PC-3 (cell line): ENCODE measurements at regions of chr9 and their contacts with region 1.

Region 1: DNA sequence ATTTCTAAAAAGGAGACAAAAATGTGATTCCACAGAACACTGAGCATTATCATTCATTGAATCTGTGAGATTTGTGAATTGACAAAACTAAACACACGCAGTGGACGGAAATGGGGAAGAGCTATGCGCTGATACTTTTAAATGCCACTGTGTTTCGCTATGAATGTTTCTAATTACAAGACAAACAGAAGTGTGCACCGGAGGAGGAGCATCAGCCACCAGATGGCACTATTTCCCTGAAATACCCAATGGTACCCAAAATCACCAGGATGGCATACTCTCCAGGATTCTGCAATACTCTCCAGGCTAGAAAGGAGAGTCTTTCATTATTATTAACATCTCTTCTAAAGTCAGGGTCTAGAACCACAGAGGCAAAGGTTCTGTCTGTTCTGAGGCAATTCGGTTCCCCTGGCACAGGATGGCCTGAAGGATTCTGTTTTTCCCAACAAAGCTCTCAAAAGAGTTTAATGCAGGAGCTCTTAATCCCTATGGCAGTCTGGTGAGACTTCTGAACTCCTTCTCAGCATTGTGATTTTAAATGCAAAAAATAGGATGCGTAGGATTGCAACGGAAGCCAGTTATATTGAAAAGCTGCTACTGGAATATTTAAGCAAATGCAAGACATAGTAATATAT is 13.8 kb upstream of the PUM3 start:
- DNase-seq: peak; percentile 75
- ATAC-seq: peak; percentile 81
- H3K4me3 ChIP-seq: no peak overlapping the region
- H3K27ac ChIP-seq: no peak overlapping the region
- H3K4me1 ChIP-seq: no peaks in the 10 kb centered on the region
- H3K27me3 ChIP-seq: no peaks in the 10 kb centered on the region; the same call in 1 of the 2 replicates
- CTCF ChIP-seq: peak; percentile 80

Region 2: DNA sequence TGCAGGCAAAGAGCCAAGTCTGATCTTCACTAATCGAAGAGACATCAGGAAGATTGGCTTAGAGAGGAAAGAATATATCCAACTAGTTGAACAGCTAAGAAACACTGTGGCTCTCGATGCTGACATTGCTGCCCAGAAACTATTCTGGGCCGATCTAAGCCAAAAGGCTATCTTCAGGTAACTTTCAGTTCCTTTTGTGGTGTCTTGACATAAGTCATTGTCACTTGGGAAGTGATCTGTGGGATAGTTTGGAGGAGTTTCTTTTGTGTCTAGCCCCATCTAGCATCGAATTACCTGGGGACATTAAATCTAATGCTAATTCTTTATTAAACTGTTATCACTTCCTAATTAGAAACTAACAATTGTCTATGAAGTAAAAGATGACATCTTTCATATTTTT is 212.1 kb before region 1 on chr9:
- CTCF ChIA-PET with region 1: no interaction called
- POLR2A ChIA-PET with region 1: no interaction called
- intact Hi-C with region 1: no loop called
- DNase-seq: no peak
- ATAC-seq: no peak
- H3K4me3 ChIP-seq: no peak overlapping the region
- H3K27ac ChIP-seq: no peak overlapping the region
- H3K4me1 ChIP-seq: no peaks in the 10 kb centered on the region
- H3K27me3 ChIP-seq: no peaks in the 10 kb centered on the region
- CTCF ChIP-seq: no peak

Region 3: DNA sequence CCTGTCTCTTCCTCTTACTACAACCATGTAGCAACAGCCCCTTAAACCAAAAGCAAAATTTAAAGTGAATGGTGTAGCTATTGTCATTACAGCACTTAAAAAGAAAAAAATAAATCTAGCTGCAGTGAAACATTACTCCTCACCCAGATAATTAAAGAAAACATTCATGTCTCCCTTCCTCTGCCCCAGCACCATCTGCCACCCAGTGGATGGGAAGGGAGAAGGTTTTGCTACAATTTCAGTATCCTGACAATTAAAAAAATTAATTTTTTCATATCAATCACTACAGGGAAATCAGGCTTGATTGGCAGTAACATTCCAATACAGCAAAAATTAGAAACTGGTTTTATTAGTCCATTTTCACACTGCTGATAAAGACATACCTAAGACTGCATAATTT is 133.6 kb after region 1 on chr9:
- CTCF ChIA-PET with region 1: no interaction called
- POLR2A ChIA-PET with region 1: no interaction called
- intact Hi-C with region 1: loop called (anchors 2 kb)
- DNase-seq: peak; percentile 7
- ATAC-seq: no peak
- H3K4me3 ChIP-seq: no peak overlapping the region
- H3K27ac ChIP-seq: no peak overlapping the region
- H3K4me1 ChIP-seq: no peaks in the 10 kb centered on the region
- H3K27me3 ChIP-seq: peaks cover 22% of the 10 kb centered on the region
- CTCF ChIP-seq: peak; percentile 38; the same call in 1 of the 2 replicates

Region 4: DNA sequence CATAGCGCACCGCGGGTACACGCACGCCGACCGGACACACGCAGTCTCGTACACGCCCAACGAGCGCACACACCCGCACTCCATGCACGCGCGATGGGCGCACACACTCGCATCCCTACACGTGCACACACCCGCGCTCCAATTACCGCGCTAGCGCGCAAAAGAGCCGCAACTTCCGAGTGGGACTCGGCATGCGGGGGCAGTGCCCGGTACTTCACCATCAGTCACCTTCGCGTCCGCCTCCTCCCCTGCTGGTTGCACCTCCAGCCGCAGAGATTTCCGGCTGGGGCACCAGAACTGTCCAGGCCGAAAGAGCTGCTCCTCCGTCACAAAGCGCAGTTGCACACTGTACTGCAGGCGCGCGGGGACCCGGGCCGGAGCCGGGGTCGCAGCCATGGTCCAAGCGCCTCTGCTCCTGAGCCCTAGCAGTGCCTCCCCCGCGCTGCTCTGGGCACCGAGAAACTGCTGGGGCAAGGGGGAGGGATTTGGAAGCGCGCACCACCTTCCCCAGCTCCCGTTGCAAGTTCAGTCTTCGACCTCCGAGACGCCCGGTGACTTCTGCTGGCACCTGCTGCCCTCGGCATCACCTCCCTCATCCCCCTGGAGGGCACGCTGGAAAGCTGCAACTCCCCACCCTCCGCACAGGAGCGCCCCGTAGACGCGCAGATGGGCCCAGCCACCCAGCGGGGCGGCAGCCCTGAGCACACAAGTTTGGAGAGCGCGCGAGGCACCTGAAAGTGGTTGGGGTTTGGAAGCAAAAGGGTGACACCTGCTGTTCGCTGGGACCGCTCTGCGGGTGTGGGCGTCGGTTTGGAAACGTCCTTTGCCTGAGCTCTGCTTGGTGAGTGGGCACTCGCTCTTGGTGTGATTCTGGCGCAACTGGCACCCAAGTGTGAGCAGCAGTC is 323.6 kb after region 1 on chr9:
- CTCF ChIA-PET with region 1: interaction called, 3 read pairs
- POLR2A ChIA-PET with region 1: no interaction called
- intact Hi-C with region 1: loop called (anchors 5 kb)
- DNase-seq: peak; percentile 48
- ATAC-seq: peak; percentile 56; the same call in 1 of the 2 replicates
- H3K4me3 ChIP-seq: no peak overlapping the region
- H3K27ac ChIP-seq: no peak overlapping the region
- H3K4me1 ChIP-seq: no peaks in the 10 kb centered on the region
- H3K27me3 ChIP-seq: peaks cover 68% of the 10 kb centered on the region
- CTCF ChIP-seq: peak; percentile 43